Activated CD4-positive, alpha-beta memory T cell treated with anti-CD3 and anti-CD28 coated beads for 36 hours (primary cell): ENCODE measurements at regions of chr4 and their contacts with region 1.

Region 1: DNA sequence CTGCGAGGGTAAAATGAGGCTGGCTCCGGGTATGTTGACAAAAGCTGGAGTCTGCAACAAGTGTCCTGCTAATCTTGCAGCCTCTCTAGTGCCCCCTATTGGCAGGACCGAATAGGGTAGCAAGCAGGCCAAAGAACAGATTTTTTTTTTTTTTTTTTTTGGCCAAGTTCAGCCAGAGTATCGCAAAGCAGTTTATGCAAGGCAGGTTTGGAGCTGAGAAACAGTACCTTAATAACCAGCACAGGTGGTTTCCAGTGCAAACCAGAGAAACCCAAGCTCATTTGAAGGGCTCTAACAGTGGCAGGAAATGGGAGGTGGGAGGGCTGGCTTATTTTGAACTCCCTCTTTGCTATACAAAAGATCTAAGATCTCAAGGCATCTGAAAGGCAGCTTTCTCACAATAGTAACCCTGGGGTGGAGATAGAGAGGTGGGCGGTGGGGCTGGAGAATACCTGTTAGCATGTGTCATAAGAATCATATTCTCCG is 38.2 kb upstream of the OCIAD2 start:
- DNase-seq: peak; percentile 65
- H3K4me3 Mint-ChIP-seq: no peak overlapping the region
- H3K27ac Mint-ChIP-seq: no peak overlapping the region
- H3K4me1 Mint-ChIP-seq: peaks cover 9% of the 10 kb centered on the region
- H3K27me3 Mint-ChIP-seq: peaks cover 2% of the 10 kb centered on the region

Region 2: GRCh38 chr4:48578132-48578968 is 366.4 kb before region 1 on chr4:
- CTCF ChIA-PET with region 1: interaction called, 15 read pairs
- POLR2A ChIA-PET with region 1: no interaction called
- intact Hi-C with region 1: no loop called
- DNase-seq: peak; percentile 37
- H3K4me3 Mint-ChIP-seq: no peak overlapping the region
- H3K27ac Mint-ChIP-seq: no peak overlapping the region
- H3K4me1 Mint-ChIP-seq: peaks cover 4% of the 10 kb centered on the region
- H3K27me3 Mint-ChIP-seq: no peaks in the 10 kb centered on the region

Region 3: GRCh38 chr4:48706736-48707135 is 238.1 kb before region 1 on chr4:
- CTCF ChIA-PET with region 1: no interaction called
- POLR2A ChIA-PET with region 1: no interaction called
- intact Hi-C with region 1: loop called (anchors 10 kb)
- DNase-seq: no peak
- H3K4me3 Mint-ChIP-seq: no peak overlapping the region
- H3K27ac Mint-ChIP-seq: no peak overlapping the region
- H3K4me1 Mint-ChIP-seq: peaks cover 17% of the 10 kb centered on the region
- H3K27me3 Mint-ChIP-seq: no peaks in the 10 kb centered on the region